MCF 10A (cell line): ENCODE measurements at regions of chr5 and their contacts with region 1.

Region 1: GRCh38 chr5:155136216-155136850 is 122.8 kb downstream of the KIF4B start:
- DNase-seq: no peak
- H3K4me3 Mint-ChIP-seq: no peak overlapping the region
- H3K27ac Mint-ChIP-seq: no peak overlapping the region
- H3K4me1 Mint-ChIP-seq: peaks cover 9% of the 10 kb centered on the region
- H3K27me3 Mint-ChIP-seq: no peaks in the 10 kb centered on the region
- CTCF ChIP-seq: no peak

Region 2: DNA sequence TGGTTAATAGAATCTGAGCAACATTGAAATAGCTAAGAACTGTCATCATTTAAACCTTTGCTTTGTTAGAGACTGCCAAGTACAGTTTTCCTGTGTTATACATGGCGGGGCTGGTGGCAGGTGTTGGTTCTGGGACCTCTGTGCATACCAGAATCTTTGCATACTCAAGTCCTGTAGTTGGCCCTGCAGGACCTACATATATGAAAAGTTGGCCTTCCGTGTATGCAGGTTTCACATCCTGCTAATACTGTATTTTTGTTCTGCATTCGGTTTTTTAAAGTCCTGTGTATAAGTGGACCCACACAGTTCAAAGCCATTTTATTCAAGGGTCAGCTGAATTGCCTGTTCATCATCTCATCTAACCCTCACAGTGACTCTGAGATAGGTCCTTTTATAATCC is 344.8 kb before region 1 on chr5:
- CTCF ChIA-PET with region 1: no interaction called
- POLR2A ChIA-PET with region 1: no interaction called
- intact Hi-C with region 1: no loop called
- DNase-seq: no peak
- H3K4me3 Mint-ChIP-seq: no peak overlapping the region
- H3K27ac Mint-ChIP-seq: no peak overlapping the region
- H3K4me1 Mint-ChIP-seq: peaks cover 7% of the 10 kb centered on the region
- H3K27me3 Mint-ChIP-seq: no peaks in the 10 kb centered on the region
- CTCF ChIP-seq: no peak

Region 3: GRCh38 chr5:154972476-154973080 is 163.8 kb before region 1 on chr5:
- CTCF ChIA-PET with region 1: interaction called, 17 read pairs
- POLR2A ChIA-PET with region 1: interaction called, 4 read pairs
- intact Hi-C with region 1: no loop called
- DNase-seq: peak; percentile 66
- H3K4me3 Mint-ChIP-seq: no peak overlapping the region
- H3K27ac Mint-ChIP-seq: no peak overlapping the region
- H3K4me1 Mint-ChIP-seq: no peaks in the 10 kb centered on the region
- H3K27me3 Mint-ChIP-seq: no peaks in the 10 kb centered on the region
- CTCF ChIP-seq: peak; percentile 68

Region 4: GRCh38 chr5:155260798-155261197 is 124.5 kb after region 1 on chr5:
- CTCF ChIA-PET with region 1: interaction called, 4 read pairs
- POLR2A ChIA-PET with region 1: no interaction called
- intact Hi-C with region 1: loop called (anchors 2 kb)
- DNase-seq: peak; percentile 16
- H3K4me3 Mint-ChIP-seq: no peak overlapping the region
- H3K27ac Mint-ChIP-seq: no peak overlapping the region
- H3K4me1 Mint-ChIP-seq: no peaks in the 10 kb centered on the region
- H3K27me3 Mint-ChIP-seq: no peaks in the 10 kb centered on the region
- CTCF ChIP-seq: peak; percentile 33

Region 5: DNA sequence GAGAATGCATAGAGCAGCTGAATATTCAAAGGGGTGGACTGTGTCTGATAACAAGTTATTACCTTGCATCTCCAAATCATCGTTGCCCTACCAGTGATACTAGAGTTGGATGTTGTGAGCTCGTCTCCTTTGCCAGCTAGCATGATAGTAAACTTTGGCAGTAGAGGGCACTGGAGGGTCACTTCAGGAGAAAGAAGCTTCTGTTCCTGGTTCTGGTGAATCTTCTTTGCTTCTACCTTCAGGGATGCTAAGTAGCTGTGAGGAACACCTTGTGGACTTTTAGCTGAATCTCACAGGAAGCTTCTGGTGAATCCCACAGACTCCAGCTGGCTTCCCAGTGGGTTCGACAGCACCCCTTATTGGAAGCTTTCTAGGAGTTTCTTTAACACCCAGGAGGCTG is 564.0 kb after region 1 on chr5:
- CTCF ChIA-PET with region 1: interaction called, 12 read pairs
- POLR2A ChIA-PET with region 1: no interaction called
- intact Hi-C with region 1: loop called (anchors 1 kb)
- DNase-seq: peak; percentile 4
- H3K4me3 Mint-ChIP-seq: no peak overlapping the region
- H3K27ac Mint-ChIP-seq: no peak overlapping the region
- H3K4me1 Mint-ChIP-seq: no peaks in the 10 kb centered on the region
- H3K27me3 Mint-ChIP-seq: no peaks in the 10 kb centered on the region
- CTCF ChIP-seq: peak; percentile 56

Region 6: GRCh38 chr5:155943516-155944407 is 807.4 kb after region 1 on chr5:
- CTCF ChIA-PET with region 1: interaction called, 12 read pairs
- POLR2A ChIA-PET with region 1: no interaction called
- intact Hi-C with region 1: loop called (anchors 1 kb)
- DNase-seq: peak; percentile 5
- H3K4me3 Mint-ChIP-seq: no peak overlapping the region
- H3K27ac Mint-ChIP-seq: no peak overlapping the region
- H3K4me1 Mint-ChIP-seq: peaks cover 10% of the 10 kb centered on the region
- H3K27me3 Mint-ChIP-seq: peaks cover 16% of the 10 kb centered on the region
- CTCF ChIP-seq: peak; percentile 99

Region 7: GRCh38 chr5:157130925-157131324 is 1994.6 kb after region 1 on chr5:
- CTCF ChIA-PET with region 1: interaction called, 11 read pairs
- POLR2A ChIA-PET with region 1: no interaction called
- intact Hi-C with region 1: no loop called
- DNase-seq: no peak
- H3K4me3 Mint-ChIP-seq: no peak overlapping the region
- H3K27ac Mint-ChIP-seq: no peak overlapping the region
- H3K4me1 Mint-ChIP-seq: no peaks in the 10 kb centered on the region
- H3K27me3 Mint-ChIP-seq: no peaks in the 10 kb centered on the region
- CTCF ChIP-seq: no peak